B cell (primary cell): ENCODE measurements at regions of chr20 and their contacts with region 1.

Region 1: GRCh38 chr20:49999329-49999728 is 16.5 kb downstream of the SNAI1 start:
- DNase-seq: peak; percentile 82
- ATAC-seq: peak; percentile 98
- H3K4me3 ChIP-seq: no peak overlapping the region
- H3K4me3 Mint-ChIP-seq: peak overlapping the region; percentile 35
- H3K27ac ChIP-seq: no peak overlapping the region
- H3K27ac Mint-ChIP-seq: peak overlapping the region; percentile 5
- H3K4me1 ChIP-seq: peaks cover 8 to 12% of the 10 kb centered on the region in 2 donors
- H3K4me1 Mint-ChIP-seq: peaks cover 18% of the 10 kb centered on the region
- H3K27me3 ChIP-seq: no peaks in the 10 kb centered on the region
- H3K27me3 Mint-ChIP-seq: peaks cover 7% of the 10 kb centered on the region
- CTCF ChIP-seq: no peak

Region 2: GRCh38 chr20:50012282-50013263 is 13.2 kb after region 1 on chr20:
- CTCF ChIA-PET with region 1: interaction called, 5 read pairs
- POLR2A ChIA-PET with region 1: interaction called, 3 read pairs
- intact Hi-C with region 1: loop called (anchors 2 kb)
- DNase-seq: peak; percentile 77
- ATAC-seq: peak; percentile 90
- H3K4me3 ChIP-seq: no peak overlapping the region
- H3K4me3 Mint-ChIP-seq: no peak overlapping the region
- H3K27ac ChIP-seq: peak overlapping the region; percentile 11 to 39
- H3K27ac Mint-ChIP-seq: peak overlapping the region; percentile 26
- H3K4me1 ChIP-seq: peaks cover 12 to 16% of the 10 kb centered on the region in 2 donors
- H3K4me1 Mint-ChIP-seq: peaks cover 14% of the 10 kb centered on the region
- H3K27me3 ChIP-seq: peaks cover 0 to 14% (median 5%) of the 10 kb centered on the region in 4 experiments
- H3K27me3 Mint-ChIP-seq: peaks cover 7% of the 10 kb centered on the region
- CTCF ChIP-seq: peak; percentile 8

Region 3: DNA sequence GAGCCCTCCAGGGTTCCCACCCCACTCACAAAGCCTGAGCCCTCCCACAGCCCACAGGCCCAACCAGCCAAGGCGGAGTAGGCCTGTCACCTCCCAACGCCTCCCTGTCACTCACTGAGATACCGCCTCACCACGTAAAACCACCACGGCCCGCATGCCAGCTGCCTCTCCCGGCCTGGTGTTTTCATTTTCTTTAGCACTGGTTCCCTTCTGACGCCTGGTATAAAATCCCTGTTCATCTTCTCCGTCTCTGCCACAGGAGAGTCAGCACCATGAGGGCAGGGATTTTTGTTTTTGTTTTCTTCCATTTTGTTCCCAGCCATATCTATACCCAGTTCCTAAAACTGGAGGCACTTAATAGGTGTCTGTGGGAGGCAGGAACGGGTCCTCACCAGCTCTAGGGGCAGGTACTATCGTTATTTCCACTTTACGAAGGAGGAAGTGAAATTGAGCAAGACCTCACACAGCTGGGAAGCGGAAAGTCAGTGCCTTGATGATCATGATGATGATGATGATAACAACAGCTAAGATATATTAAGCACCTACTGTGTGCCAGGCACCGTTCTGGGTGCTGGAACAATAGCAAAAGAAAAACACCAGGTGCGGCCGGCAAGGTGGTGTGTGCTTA is 42.0 kb after region 1 on chr20:
- CTCF ChIA-PET with region 1: interaction called, 3 read pairs
- POLR2A ChIA-PET with region 1: interaction called, 5 read pairs
- intact Hi-C with region 1: loop called (anchors 1 kb)
- DNase-seq: peak; percentile 83
- ATAC-seq: peak; percentile 88
- H3K4me3 ChIP-seq: peak overlapping the region in 4 of 5 experiments; percentile 1 to 38 (median 34)
- H3K4me3 Mint-ChIP-seq: peak overlapping the region; percentile 83
- H3K27ac ChIP-seq: peak overlapping the region; percentile 80 to 86
- H3K27ac Mint-ChIP-seq: peak overlapping the region; percentile 93
- H3K4me1 ChIP-seq: peaks cover 12 to 22% of the 10 kb centered on the region in 2 donors
- H3K4me1 Mint-ChIP-seq: peaks cover 15% of the 10 kb centered on the region
- H3K27me3 ChIP-seq: no peaks in the 10 kb centered on the region
- H3K27me3 Mint-ChIP-seq: no peaks in the 10 kb centered on the region
- CTCF ChIP-seq: no peak